ENCODE measurements at regions of chr14 and their contacts with region 1.

Region 1: GRCh38 chr14:106210652-106211051 is 684.3 kb downstream of the TMEM121 start:
- DNase-seq: peak; percentile 64
- H3K4me3 Mint-ChIP-seq: no peak overlapping the region
- H3K27ac Mint-ChIP-seq: no peak overlapping the region
- H3K4me1 Mint-ChIP-seq: peaks cover 11% of the 10 kb centered on the region
- H3K27me3 Mint-ChIP-seq: peaks cover 35% of the 10 kb centered on the region

Region 2: GRCh38 chr14:106222731-106223130 is 12.1 kb after region 1 on chr14:
- CTCF ChIA-PET with region 1: interaction called, 18 read pairs
- DNase-seq: no peak
- H3K4me3 Mint-ChIP-seq: no peak overlapping the region
- H3K27ac Mint-ChIP-seq: peak overlapping the region; percentile 83
- H3K4me1 Mint-ChIP-seq: peaks cover 34% of the 10 kb centered on the region
- H3K27me3 Mint-ChIP-seq: peaks cover 9% of the 10 kb centered on the region

Region 3: DNA sequence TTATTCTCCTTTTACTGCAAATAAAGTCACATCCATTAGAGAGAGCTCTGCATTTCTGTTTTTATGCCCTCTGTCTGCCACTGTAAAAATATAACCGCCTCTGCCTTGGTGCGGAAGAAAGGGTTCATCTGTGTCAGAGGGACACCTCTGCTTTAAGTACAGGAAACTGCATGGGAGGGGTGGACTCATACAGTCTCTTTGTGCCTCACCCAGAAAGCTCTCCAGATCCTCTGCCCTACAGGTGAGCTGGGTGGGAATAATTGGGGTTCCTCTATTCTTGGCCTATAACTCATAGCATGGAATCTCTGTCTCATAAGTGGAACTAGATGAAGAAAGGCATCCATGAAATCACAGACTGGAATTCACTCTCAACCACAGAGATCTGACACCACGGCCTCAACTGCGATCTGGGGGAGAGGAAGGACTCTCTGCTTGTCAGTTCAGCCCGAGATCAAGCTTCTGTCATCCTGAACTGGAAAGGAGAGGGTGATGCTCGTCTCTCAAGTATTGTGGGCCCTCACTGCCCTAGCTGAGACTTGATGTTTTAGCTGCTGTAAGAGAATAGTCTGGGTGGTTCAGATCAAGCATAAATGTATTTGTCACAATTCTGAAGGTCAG is 18.0 kb after region 1 on chr14:
- CTCF ChIA-PET with region 1: interaction called, 18 read pairs
- DNase-seq: peak; percentile 60
- H3K4me3 Mint-ChIP-seq: peak overlapping the region; percentile 55
- H3K27ac Mint-ChIP-seq: peak overlapping the region; percentile 90
- H3K4me1 Mint-ChIP-seq: peaks cover 44% of the 10 kb centered on the region
- H3K27me3 Mint-ChIP-seq: peaks cover 3% of the 10 kb centered on the region